Left ventricle myocardium inferior (tissue), 1 donor: ENCODE measurements at regions of chrX and their contacts with region 1.

Region 1: GRCh38 chrX:11533211-11533651 is 132.5 kb downstream of the ARHGAP6 start:
- DNase-seq: no peak
- H3K4me3 ChIP-seq: no peak overlapping the region
- H3K27ac ChIP-seq: peak overlapping the region; percentile 38
- H3K4me1 ChIP-seq: no peaks in the 10 kb centered on the region
- H3K27me3 ChIP-seq: no peaks in the 10 kb centered on the region
- CTCF ChIP-seq: peak; percentile 80

Region 2: DNA sequence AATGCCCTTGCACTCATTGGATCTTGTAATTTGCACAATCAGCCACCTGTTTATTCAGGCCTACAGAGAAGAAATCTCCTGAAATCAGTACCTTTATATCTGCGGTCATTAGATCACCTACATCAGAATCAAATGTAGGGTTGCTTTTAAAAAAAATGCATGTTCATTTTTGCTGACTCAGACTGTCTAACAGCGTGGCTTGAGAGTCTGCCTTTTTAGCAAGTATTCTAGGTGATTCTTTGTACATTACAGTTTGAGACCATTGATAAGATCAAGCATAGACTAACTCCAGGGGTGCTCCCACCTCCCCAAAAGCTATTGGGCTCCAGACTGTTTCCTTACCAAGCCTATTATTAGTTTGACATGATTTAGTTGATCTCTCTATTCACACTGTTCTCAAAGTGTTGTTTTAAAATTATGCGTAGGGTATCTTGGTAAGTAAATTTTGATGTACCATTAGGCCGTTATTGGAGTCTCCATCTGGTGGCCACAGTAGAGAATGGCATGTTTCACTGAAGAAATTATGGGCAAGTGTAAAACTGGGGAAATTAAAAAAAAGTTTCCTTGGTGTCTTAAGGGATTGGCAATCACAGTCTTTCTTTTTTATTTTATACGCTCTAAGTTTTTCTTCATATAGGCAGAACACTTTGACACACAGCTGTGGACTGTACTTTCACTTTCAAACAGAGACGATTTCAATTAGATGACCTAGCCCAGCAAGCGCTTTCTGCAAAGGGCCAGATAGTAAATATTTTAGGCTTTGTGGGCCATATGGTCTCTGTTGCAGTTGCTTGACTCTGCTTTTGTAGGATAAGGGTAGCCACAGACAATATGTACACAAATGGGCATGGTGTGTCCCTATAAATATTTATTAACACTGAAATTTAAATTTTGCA is 191.1 kb after region 1 on chrX:
- intact Hi-C with region 1: loop called (anchors 5 kb)
- DNase-seq: no peak
- H3K4me3 ChIP-seq: no peak overlapping the region
- H3K27ac ChIP-seq: no peak overlapping the region
- H3K4me1 ChIP-seq: no peaks in the 10 kb centered on the region
- H3K27me3 ChIP-seq: no peaks in the 10 kb centered on the region
- CTCF ChIP-seq: peak; percentile 71

Region 3: GRCh38 chrX:11770320-11770719 is 237.1 kb after region 1 on chrX:
- intact Hi-C with region 1: loop called (anchors 10 kb)
- DNase-seq: no peak
- H3K4me3 ChIP-seq: no peak overlapping the region
- H3K27ac ChIP-seq: no peak overlapping the region
- H3K4me1 ChIP-seq: no peaks in the 10 kb centered on the region
- H3K27me3 ChIP-seq: no peaks in the 10 kb centered on the region
- CTCF ChIP-seq: peak; percentile 82